ENCODE measurements at regions of chr9 and their contacts with region 1.

Region 1: DNA sequence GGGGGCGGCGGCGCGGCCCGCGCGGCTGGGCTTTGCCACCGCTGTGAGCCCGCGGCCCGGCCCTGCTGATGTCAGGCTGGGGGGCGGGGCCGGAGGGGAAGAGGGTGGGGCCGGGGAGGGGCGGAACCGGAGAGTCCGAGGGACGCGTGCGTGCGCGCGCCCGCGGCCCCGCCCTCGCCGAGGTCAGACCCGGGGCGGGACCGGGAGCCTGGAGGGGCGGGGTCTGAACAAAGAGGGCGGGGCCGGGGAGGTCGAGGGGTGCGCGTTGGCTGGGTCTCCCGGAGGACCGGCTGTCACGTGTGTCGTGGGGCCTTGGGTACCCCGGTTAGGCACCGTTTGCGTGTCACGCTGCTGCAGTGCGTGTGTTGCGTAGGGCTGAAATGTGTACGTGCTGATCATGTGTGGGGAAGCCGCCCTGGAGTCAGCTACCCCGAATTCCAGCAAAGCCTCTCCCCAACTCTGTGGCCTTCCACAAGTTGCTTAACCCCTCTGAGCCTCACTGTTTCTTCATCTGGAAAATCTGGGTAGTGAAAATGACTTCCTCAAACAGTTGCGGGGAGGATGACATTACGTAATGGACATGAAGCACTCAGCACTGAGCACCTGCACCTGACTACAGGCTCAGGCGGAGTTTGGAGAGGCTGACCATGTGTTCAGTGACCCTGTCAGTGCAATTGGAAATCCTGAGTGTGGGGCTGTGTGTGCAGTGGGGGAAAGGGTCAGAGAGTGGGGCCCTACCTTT is at the start of gene RALGDS:
- DNase-seq: peak; percentile 82
- H3K4me3 ChIP-seq: peak within 1 kb of the TSS; percentile 56 to 83 (median 62)
- H3K27ac ChIP-seq: peak within 1 kb of the TSS; percentile 37
- H3K4me1 ChIP-seq: peaks cover 11% of the 10 kb centered on the region
- H3K27me3 ChIP-seq: no peaks in the 10 kb centered on the region
- CTCF ChIP-seq: no peak
- total RNA-seq, gene RALGDS: 15.2 to 19.9 TPM

Region 2: GRCh38 chr9:132978451-132979131 is 142.8 kb before region 1 on chr9 and contains the start of gene GFI1B:
- CTCF ChIA-PET with region 1: no interaction called
- dilution Hi-C with region 1: no loop called
- in situ Hi-C with region 1: no loop called
- intact Hi-C with region 1: no loop called
- DNase-seq: no peak
- H3K4me3 ChIP-seq: no peak within 1 kb of the TSS
- H3K27ac ChIP-seq: no peak within 1 kb of the TSS
- H3K4me1 ChIP-seq: no peaks in the 10 kb centered on the region
- H3K27me3 ChIP-seq: peaks cover 11% of the 10 kb centered on the region
- CTCF ChIP-seq: no peak
- total RNA-seq, gene GFI1B: not detected

Region 3: GRCh38 chr9:133144137-133144903 is 23.0 kb after region 1 on chr9:
- CTCF ChIA-PET with region 1: no interaction called
- dilution Hi-C with region 1: no loop called
- in situ Hi-C with region 1: no loop called
- intact Hi-C with region 1: loop called (anchors 1 kb)
- DNase-seq: peak; percentile 52
- H3K4me3 ChIP-seq: peak overlapping the region in 1 of 3 experiments; percentile 37
- H3K27ac ChIP-seq: no peak overlapping the region
- H3K4me1 ChIP-seq: peaks cover 23% of the 10 kb centered on the region
- H3K27me3 ChIP-seq: no peaks in the 10 kb centered on the region
- CTCF ChIP-seq: peak; percentile 76 to 96

Measured in mammary epithelial cell (primary cell).